PC-3 (cell line): ENCODE measurements at regions of chr3 and their contacts with region 1.

Region 1: GRCh38 chr3:27134165-27134796 is 234.9 kb downstream of the NEK10 start:
- DNase-seq: peak; percentile 82
- ATAC-seq: peak; percentile 93
- H3K4me3 ChIP-seq: no peak overlapping the region
- H3K27ac ChIP-seq: no peak overlapping the region
- H3K4me1 ChIP-seq: no peaks in the 10 kb centered on the region
- H3K27me3 ChIP-seq: peaks cover 18% of the 10 kb centered on the region
- CTCF ChIP-seq: peak; percentile 93

Region 2: DNA sequence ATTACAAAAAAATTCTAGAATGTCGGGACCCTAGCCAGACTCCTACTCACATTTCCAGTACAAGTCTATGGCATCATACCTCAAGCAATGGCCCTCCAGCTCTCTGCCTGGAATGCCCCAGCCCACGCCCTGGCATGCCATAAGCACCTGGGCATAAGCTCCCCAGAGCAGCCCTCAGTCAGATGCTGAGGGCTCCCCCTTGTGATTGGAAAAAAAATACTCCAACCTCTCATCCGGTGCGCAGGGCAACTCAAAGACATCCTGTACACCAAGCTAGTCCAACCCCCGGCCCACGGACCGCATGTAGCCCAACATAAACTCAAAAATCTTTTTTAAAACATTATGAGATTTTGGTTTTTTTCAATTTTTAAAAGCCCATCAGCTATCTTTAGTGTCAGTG is 119.5 kb after region 1 on chr3:
- CTCF ChIA-PET with region 1: interaction called, 18 read pairs
- POLR2A ChIA-PET with region 1: no interaction called
- intact Hi-C with region 1: loop called (anchors 1 kb)
- DNase-seq: peak; percentile 81
- ATAC-seq: peak; percentile 100
- H3K4me3 ChIP-seq: no peak overlapping the region
- H3K27ac ChIP-seq: no peak overlapping the region
- H3K4me1 ChIP-seq: no peaks in the 10 kb centered on the region
- H3K27me3 ChIP-seq: no peaks in the 10 kb centered on the region
- CTCF ChIP-seq: peak; percentile 86

Region 3: GRCh38 chr3:27279123-27279522 is 144.8 kb after region 1 on chr3:
- CTCF ChIA-PET with region 1: no interaction called
- POLR2A ChIA-PET with region 1: no interaction called
- intact Hi-C with region 1: loop called (anchors 1 kb)
- DNase-seq: peak; percentile 23
- ATAC-seq: peak; percentile 50
- H3K4me3 ChIP-seq: no peak overlapping the region
- H3K27ac ChIP-seq: no peak overlapping the region
- H3K4me1 ChIP-seq: no peaks in the 10 kb centered on the region
- H3K27me3 ChIP-seq: no peaks in the 10 kb centered on the region
- CTCF ChIP-seq: peak; percentile 57

Region 4: DNA sequence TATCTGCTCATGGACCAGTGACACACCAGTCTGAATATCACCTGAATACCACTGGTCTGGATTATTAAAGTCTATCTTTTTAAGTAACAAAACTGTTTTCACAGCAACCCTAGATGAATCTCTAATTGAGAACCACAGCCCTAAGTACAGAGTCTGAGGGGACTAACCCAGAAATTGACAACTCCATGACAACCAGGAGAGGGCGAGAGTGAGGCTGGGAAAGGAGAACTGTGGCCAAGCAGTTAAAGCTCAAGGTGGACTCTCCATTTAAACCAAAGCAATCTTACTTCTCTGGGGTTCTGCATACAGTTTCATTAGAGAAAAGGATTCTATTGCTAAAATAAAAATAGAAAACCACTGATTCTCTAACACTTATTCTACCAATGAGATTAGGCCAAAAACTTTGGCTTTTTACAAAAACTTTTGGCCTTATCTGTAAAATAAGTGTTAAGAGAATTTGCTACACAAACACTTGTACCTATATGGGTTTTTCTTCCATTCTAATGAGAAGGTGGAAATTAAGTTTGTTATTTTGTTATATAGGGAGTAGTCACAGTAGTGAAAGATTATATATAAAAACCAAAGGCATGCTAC is 223.5 kb after region 1 on chr3:
- CTCF ChIA-PET with region 1: no interaction called
- POLR2A ChIA-PET with region 1: no interaction called
- intact Hi-C with region 1: loop called (anchors 2 kb)
- DNase-seq: peak; percentile 83
- ATAC-seq: peak; percentile 90
- H3K4me3 ChIP-seq: no peak overlapping the region
- H3K27ac ChIP-seq: no peak overlapping the region
- H3K4me1 ChIP-seq: peaks cover 13% of the 10 kb centered on the region
- H3K27me3 ChIP-seq: no peaks in the 10 kb centered on the region
- CTCF ChIP-seq: peak; percentile 87

Region 5: GRCh38 chr3:27467545-27467944 is 333.3 kb after region 1 on chr3:
- CTCF ChIA-PET with region 1: no interaction called
- POLR2A ChIA-PET with region 1: no interaction called
- intact Hi-C with region 1: loop called (anchors 5 kb)
- DNase-seq: peak; percentile 72
- ATAC-seq: peak; percentile 81
- H3K4me3 ChIP-seq: no peak overlapping the region
- H3K27ac ChIP-seq: no peak overlapping the region
- H3K4me1 ChIP-seq: 0 out of 2 replicates have a peak, but pooled peaks cover 10% of the 10 kb centered on the region
- H3K27me3 ChIP-seq: no peaks in the 10 kb centered on the region
- CTCF ChIP-seq: peak; percentile 79

Region 6: GRCh38 chr3:27643355-27643754 is 509.1 kb after region 1 on chr3:
- CTCF ChIA-PET with region 1: no interaction called
- POLR2A ChIA-PET with region 1: no interaction called
- intact Hi-C with region 1: no loop called
- DNase-seq: peak; percentile 39
- ATAC-seq: no peak
- H3K4me3 ChIP-seq: no peak overlapping the region
- H3K27ac ChIP-seq: no peak overlapping the region
- H3K4me1 ChIP-seq: peaks cover 13% of the 10 kb centered on the region
- H3K27me3 ChIP-seq: no peaks in the 10 kb centered on the region
- CTCF ChIP-seq: no peak

Region 7: GRCh38 chr3:28328188-28329151 is 1194.2 kb after region 1 on chr3:
- CTCF ChIA-PET with region 1: no interaction called
- POLR2A ChIA-PET with region 1: no interaction called
- intact Hi-C with region 1: loop called (anchors 10 kb)
- DNase-seq: peak; percentile 75
- ATAC-seq: peak; percentile 33; the same call in 1 of the 2 replicates
- H3K4me3 ChIP-seq: no peak overlapping the region
- H3K27ac ChIP-seq: no peak overlapping the region
- H3K4me1 ChIP-seq: no peaks in the 10 kb centered on the region
- H3K27me3 ChIP-seq: no peaks in the 10 kb centered on the region
- CTCF ChIP-seq: peak; percentile 82